ENCODE measurements at regions of chr3 and their contacts with region 1.

Region 1: GRCh38 chr3:129249276-129250065 is at the start of gene COPG1:
- DNase-seq: peak; percentile 89
- H3K4me3 Mint-ChIP-seq: peak within 1 kb of the TSS; percentile 90
- H3K27ac Mint-ChIP-seq: peak within 1 kb of the TSS; percentile 96
- H3K4me1 Mint-ChIP-seq: peaks cover 54% of the 10 kb centered on the region
- H3K27me3 Mint-ChIP-seq: no peaks in the 10 kb centered on the region
- total RNA-seq, gene COPG1: 110 to 136 TPM

Region 2: GRCh38 chr3:129026728-129027543 is 222.5 kb before region 1 on chr3:
- CTCF ChIA-PET with region 1: interaction called, 12 read pairs
- POLR2A ChIA-PET with region 1: no interaction called
- DNase-seq: peak; percentile 95
- H3K4me3 Mint-ChIP-seq: peak overlapping the region; percentile 75
- H3K27ac Mint-ChIP-seq: peak overlapping the region; percentile 94
- H3K4me1 Mint-ChIP-seq: peaks cover 17% of the 10 kb centered on the region
- H3K27me3 Mint-ChIP-seq: no peaks in the 10 kb centered on the region

Region 3: GRCh38 chr3:129068291-129068886 is 181.1 kb before region 1 on chr3:
- CTCF ChIA-PET with region 1: interaction called, 17 read pairs
- POLR2A ChIA-PET with region 1: no interaction called
- DNase-seq: no peak
- H3K4me3 Mint-ChIP-seq: peak overlapping the region; percentile 63
- H3K27ac Mint-ChIP-seq: no peak overlapping the region
- H3K4me1 Mint-ChIP-seq: peaks cover 16% of the 10 kb centered on the region
- H3K27me3 Mint-ChIP-seq: peaks cover 6% of the 10 kb centered on the region

Region 4: GRCh38 chr3:129160891-129161859 is 88.3 kb before region 1 on chr3 and contains the start of gene ISY1:
- CTCF ChIA-PET with region 1: interaction called, 48 read pairs
- POLR2A ChIA-PET with region 1: interaction called, 9 read pairs
- DNase-seq: peak; percentile 91
- H3K4me3 Mint-ChIP-seq: peak within 1 kb of the TSS; percentile 95
- H3K27ac Mint-ChIP-seq: peak within 1 kb of the TSS; percentile 98
- H3K4me1 Mint-ChIP-seq: peaks cover 37% of the 10 kb centered on the region
- H3K27me3 Mint-ChIP-seq: no peaks in the 10 kb centered on the region
- total RNA-seq, gene ISY1: 56.9 to 60.9 TPM

Region 5: DNA sequence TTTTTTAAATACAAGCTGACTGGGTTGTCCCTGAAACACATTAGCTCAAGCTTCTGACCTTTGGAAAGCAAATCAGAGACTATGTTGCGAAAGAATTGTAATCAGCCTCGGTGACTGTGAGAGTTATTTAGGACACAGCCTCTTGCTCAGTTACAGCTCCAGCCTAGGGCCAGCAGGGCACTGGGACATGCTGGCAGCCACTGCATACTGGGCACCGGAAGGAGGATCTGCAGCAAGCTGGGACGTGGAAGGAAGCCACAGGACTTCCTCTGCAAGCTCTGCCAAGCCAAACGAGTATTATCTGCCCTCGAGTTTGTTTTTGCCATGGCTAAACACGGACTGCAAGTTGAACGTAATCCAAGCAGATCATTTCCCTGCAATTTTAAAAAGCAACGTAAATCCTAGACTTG is 24.5 kb before region 1 on chr3:
- CTCF ChIA-PET with region 1: interaction called, 38 read pairs
- POLR2A ChIA-PET with region 1: no interaction called
- DNase-seq: peak; percentile 22
- H3K4me3 Mint-ChIP-seq: peak overlapping the region; percentile 40
- H3K27ac Mint-ChIP-seq: peak overlapping the region; percentile 86
- H3K4me1 Mint-ChIP-seq: peaks cover 49% of the 10 kb centered on the region
- H3K27me3 Mint-ChIP-seq: no peaks in the 10 kb centered on the region

Region 6: GRCh38 chr3:129238945-129239706 is 10.3 kb before region 1 on chr3:
- CTCF ChIA-PET with region 1: interaction called, 38 read pairs
- POLR2A ChIA-PET with region 1: interaction called, 5 read pairs
- DNase-seq: peak; percentile 61
- H3K4me3 Mint-ChIP-seq: peak overlapping the region; percentile 28
- H3K27ac Mint-ChIP-seq: peak overlapping the region; percentile 93
- H3K4me1 Mint-ChIP-seq: peaks cover 54% of the 10 kb centered on the region
- H3K27me3 Mint-ChIP-seq: no peaks in the 10 kb centered on the region

Region 7: GRCh38 chr3:129336093-129336709 is 86.7 kb after region 1 on chr3:
- CTCF ChIA-PET with region 1: no interaction called
- POLR2A ChIA-PET with region 1: no interaction called
- DNase-seq: no peak
- H3K4me3 Mint-ChIP-seq: no peak overlapping the region
- H3K27ac Mint-ChIP-seq: no peak overlapping the region
- H3K4me1 Mint-ChIP-seq: no peaks in the 10 kb centered on the region
- H3K27me3 Mint-ChIP-seq: no peaks in the 10 kb centered on the region

Region 8: DNA sequence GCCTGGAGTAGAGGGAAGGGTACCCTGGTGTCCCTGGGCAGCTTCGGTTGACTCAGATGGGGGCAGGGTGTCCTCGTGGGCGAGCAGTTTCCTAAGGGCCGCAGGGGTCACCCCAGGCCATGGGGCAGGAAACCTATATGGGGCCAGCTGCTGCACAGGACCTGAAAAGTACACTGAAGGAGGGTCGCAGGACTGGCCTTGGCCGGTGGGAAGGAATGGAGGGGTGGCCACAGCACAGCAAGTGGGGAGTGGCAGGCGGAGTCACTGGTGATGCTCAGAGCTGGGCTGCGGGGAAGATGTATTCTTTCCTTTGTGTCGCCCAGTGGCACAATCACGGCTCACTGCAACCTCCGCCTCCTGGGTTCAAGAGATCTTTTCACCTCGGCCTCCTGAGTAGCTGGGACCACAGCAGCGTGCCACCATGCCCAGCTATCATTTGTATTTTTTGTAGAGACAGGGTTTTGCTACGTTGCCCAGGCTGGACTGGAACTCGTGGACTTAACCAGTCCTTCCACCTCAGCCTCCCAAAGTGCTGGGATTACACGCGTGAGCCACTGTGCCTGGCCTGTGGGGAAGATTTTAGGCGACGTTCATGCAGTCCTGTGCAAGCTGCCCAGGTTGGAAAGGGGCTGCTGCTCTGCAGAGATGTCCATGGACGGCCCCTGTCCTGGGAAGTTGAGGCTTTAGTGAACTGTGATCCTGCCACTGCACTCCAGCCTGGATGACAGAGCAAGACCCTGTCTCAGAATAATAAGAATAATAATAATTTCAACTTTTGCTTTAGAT is 121.8 kb after region 1 on chr3:
- CTCF ChIA-PET with region 1: no interaction called
- POLR2A ChIA-PET with region 1: no interaction called
- DNase-seq: no peak
- H3K4me3 Mint-ChIP-seq: no peak overlapping the region
- H3K27ac Mint-ChIP-seq: no peak overlapping the region
- H3K4me1 Mint-ChIP-seq: no peaks in the 10 kb centered on the region
- H3K27me3 Mint-ChIP-seq: peaks cover 2% of the 10 kb centered on the region